ENCODE measurements at regions of chr3 and their contacts with region 1.

Region 1: DNA sequence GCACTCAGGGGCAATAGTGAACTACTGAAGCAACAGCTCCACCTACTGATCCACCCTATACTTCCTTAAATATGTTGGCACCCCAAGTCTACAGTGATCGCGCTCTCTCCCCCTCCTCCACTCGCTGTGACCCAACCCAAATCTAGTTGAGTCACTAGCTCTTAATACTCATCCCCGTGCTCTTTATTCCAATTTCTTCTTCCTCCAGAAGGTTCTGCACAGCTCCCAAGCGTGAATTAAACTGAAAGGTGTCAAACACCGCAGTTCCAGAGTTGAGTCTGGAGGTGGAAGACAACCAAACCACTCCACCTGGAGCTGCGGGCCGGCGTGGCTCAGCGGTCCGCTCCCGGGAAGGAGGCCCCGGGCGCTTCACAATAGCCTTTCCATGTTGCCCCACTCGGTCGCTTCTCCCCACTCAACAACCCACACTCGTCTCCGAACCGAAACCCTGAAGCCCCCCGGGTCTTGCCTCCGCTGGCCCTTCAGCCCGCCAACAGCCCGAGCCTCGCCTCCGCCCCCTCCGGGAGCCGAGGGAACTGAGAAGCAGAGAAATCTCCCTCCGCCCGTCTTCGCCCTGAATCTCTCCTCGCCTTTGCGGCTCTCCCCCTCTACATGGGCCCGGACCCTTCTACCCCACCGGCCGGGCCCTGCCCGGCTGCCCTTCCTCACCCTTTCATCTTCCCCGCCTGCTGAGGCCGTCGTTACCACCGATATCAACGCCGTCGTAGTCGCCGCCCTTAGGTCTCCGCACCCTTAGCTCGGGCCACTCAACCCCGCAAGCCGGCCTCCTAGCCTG is 578 bp downstream of the NAA50 start:
- DNase-seq: peak; percentile 79 to 86
- H3K4me3 ChIP-seq: peak overlapping the region; percentile 77
- H3K27ac ChIP-seq: peak overlapping the region; percentile 98
- H3K4me1 ChIP-seq: peaks cover 51% of the 10 kb centered on the region
- H3K27me3 ChIP-seq: no peaks in the 10 kb centered on the region
- CTCF ChIP-seq: peak; percentile 72

Region 2: GRCh38 chr3:113495035-113495434 is 250.4 kb before region 1 on chr3:
- CTCF ChIA-PET with region 1: no interaction called
- POLR2A ChIA-PET with region 1: interaction called, 9 read pairs
- intact Hi-C with region 1: loop called (anchors 1 kb)
- DNase-seq: peak; percentile 12 to 46
- H3K4me3 ChIP-seq: no peak overlapping the region
- H3K27ac ChIP-seq: no peak overlapping the region; the same call in 1 of the 2 replicates
- H3K4me1 ChIP-seq: peaks cover 7% of the 10 kb centered on the region
- H3K27me3 ChIP-seq: no peaks in the 10 kb centered on the region
- CTCF ChIP-seq: peak; percentile 69

Region 3: DNA sequence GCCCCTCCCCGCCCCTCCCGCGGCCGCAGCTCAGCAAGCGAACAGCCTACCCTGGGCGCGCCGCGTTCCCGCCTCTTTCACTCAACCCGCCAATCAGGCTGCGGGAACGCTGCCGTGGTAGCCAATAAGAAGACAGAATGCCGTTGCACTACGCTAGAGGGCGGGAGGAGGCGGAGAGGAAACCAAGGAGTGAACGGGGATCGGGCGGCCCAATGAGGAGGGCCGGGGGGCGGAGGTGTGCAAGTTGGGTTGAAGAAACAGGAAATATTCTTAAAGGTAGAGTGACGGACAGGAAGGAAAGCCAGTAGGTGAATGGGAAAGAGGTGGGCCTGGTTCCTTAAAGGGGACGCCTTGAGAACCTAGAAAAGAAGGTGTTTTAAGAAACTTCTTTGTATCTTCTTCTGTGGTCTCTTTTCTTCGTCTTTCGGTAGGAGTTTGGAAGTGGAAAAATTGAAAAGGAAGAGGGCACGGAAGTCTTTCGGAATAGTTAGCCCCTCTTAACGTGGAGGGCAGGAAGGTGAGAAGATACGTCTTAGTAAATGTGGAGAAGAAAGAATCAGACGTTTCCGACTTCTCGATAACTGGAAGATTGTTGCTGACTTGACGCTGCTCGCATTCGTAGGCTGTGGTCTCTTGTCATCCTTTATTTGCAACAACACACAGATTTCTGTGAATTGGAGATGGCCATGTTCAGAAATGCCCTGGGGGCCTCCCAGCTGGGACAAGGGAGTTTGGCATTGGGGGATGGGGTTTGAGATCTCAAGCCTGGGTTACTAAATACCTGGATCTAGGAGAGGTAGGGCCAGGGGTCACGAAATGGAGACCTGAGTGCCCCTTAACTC is 48.6 kb before region 1 on chr3:
- CTCF ChIA-PET with region 1: no interaction called
- POLR2A ChIA-PET with region 1: no interaction called
- intact Hi-C with region 1: loop called (anchors 1 kb)
- DNase-seq: peak; percentile 96 to 99
- H3K4me3 ChIP-seq: peak overlapping the region; percentile 76
- H3K27ac ChIP-seq: peak overlapping the region; percentile 40
- H3K4me1 ChIP-seq: peaks cover 13% of the 10 kb centered on the region
- H3K27me3 ChIP-seq: no peaks in the 10 kb centered on the region
- CTCF ChIP-seq: no peak

Region 4: DNA sequence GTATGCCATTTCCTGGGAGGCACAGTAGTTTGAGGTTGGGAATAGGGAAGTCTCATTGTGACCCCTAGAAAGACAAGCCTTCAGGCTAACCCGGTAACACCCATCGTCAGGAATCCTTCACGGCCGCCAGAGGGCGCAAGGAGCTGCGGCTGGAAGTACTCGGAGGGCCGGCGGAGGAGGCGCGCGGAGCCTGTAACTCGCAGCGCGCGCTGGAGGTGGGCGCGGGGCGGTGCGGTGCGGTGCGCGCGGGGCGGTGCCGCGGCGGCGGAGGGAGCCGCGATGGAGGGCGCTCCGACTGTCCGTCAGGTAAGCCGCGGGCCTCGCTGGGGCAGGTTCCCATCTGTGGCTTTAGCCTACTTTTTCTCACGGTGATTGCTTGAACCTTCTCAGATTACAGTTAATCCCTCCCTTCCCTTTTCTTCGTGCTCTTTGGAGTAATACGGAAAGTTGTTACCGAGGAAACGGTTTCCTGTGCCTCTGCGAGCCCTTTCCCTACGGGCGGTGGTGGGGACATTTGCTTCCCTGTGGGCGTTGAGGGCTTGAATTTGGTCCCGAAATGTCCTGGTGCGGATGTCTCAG is 93.2 kb after region 1 on chr3 and contains the start of gene GRAMD1C:
- CTCF ChIA-PET with region 1: no interaction called
- POLR2A ChIA-PET with region 1: no interaction called
- intact Hi-C with region 1: loop called (anchors 2 kb)
- DNase-seq: peak; percentile 72 to 85
- H3K4me3 ChIP-seq: peak within 1 kb of the TSS; percentile 64; the same call in 1 of the 2 replicates
- H3K27ac ChIP-seq: no peak within 1 kb of the TSS
- H3K4me1 ChIP-seq: peaks cover 14% of the 10 kb centered on the region
- H3K27me3 ChIP-seq: no peaks in the 10 kb centered on the region
- CTCF ChIP-seq: peak; percentile 86
- total RNA-seq, gene GRAMD1C: 14.7 and 15.7 TPM in 2 replicates

Region 5: GRCh38 chr3:113947372-113948014 is 202.0 kb after region 1 on chr3 and contains the start of gene ZDHHC23:
- CTCF ChIA-PET with region 1: no interaction called
- POLR2A ChIA-PET with region 1: no interaction called
- intact Hi-C with region 1: loop called (anchors 2 kb)
- DNase-seq: peak; percentile 50 to 94
- H3K4me3 ChIP-seq: peak within 1 kb of the TSS; percentile 82
- H3K27ac ChIP-seq: no peak within 1 kb of the TSS
- H3K4me1 ChIP-seq: peaks cover 7% of the 10 kb centered on the region
- H3K27me3 ChIP-seq: no peaks in the 10 kb centered on the region
- CTCF ChIP-seq: no peak
- total RNA-seq, gene ZDHHC23: 17.5 and 20.9 TPM in 2 replicates

Region 6: GRCh38 chr3:115652738-115653137 is 1907.3 kb after region 1 on chr3:
- CTCF ChIA-PET with region 1: no interaction called
- POLR2A ChIA-PET with region 1: interaction called, 21 read pairs
- intact Hi-C with region 1: no loop called
- DNase-seq: no peak
- H3K4me3 ChIP-seq: no peak overlapping the region
- H3K27ac ChIP-seq: no peak overlapping the region
- H3K4me1 ChIP-seq: peaks cover 2% of the 10 kb centered on the region; the same call in 1 of the 2 replicates
- H3K27me3 ChIP-seq: no peaks in the 10 kb centered on the region
- CTCF ChIP-seq: no peak

Measured in PC-9 (cell line).